ENCODE measurements at regions of chr3 and their contacts with region 1.

Region 1: GRCh38 chr3:11651900-11652299 is 8.2 kb upstream of the VGLL4 start:
- DNase-seq: no peak
- ATAC-seq: peak in 1 of 2 donors; percentile 27

Region 2: GRCh38 chr3:11099306-11099705 is 552.6 kb before region 1 on chr3:
- intact Hi-C with region 1: no loop called
- DNase-seq: no peak
- ATAC-seq: no peak

Region 3: GRCh38 chr3:11379233-11379823 is 272.6 kb before region 1 on chr3:
- intact Hi-C with region 1: loop called (anchors 2 to 5 kb)
- DNase-seq: no peak
- ATAC-seq: peak; percentile 70 to 78

Region 4: DNA sequence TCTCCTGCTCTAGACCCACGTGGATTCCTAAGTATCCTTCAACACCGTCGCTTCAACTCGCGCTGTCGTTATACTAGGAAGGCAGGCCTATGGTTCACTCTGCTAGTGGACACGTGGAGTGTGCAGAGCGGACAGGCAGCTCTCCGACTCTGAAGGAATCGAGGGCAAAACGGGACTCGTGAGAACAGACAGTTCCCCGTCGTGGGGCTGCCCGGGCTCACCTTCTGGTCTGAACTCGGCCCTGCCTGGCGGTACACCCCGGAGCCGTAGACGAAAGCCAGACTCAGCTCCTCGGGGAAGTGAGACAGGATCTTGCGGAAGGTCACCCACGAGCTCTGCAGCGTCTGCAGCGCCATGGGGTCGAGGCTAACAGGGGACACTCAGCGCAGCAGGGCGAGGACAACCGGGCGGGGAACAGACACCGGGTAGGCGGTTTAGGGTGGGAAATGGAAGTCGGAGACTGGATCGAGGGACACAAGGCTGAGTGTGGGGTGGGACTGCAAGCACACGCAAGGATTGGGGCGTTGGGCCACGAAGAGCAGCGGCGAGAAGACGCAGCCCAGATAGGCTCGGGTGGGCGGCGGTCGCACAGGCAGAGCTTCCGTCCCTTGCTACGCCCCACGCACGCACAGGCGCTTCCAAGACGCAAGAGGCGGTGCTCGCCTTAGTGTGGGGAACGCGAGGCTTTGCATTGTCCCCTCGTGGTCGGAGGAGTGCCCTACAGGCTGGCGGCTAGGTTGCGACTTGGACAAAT is 194.6 kb after region 1 on chr3 and contains the start of gene TAMM41:
- intact Hi-C with region 1: no loop called
- DNase-seq: peak; percentile 95
- ATAC-seq: peak; percentile 100
- total RNA-seq, gene TAMM41: 9.4 to 10.4 TPM

Region 5: DNA sequence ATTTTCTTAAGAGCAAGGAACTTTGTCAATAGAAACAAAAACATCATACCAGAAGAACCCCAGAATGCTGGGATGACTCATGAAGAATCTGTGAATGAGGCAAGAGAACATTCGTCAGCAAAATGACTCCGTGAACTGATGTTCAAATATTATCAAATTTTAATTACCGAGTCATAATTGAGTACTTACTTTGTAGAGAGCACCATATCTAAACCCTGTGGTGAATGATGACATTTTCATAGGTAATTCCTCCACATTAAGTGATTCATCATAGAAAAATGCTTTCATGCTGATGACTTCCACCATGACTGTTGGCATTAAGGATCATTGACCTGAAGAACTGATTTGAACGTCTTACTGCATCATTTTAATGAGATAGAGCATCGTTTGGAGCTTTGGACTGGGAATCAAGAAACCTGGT is 693.3 kb after region 1 on chr3:
- intact Hi-C with region 1: no loop called
- DNase-seq: no peak
- ATAC-seq: no peak

Measured in left cardiac atrium (tissue), 4 donors.